Mammary epithelial cell (primary cell): ENCODE measurements at regions of chr13 and their contacts with region 1.

Region 1: GRCh38 chr13:27953676-27954405 is 15.3 kb downstream of the CDX2 start:
- DNase-seq: peak; percentile 69
- H3K4me3 ChIP-seq: peak overlapping the region; percentile 51 to 61 (median 56)
- H3K27ac ChIP-seq: no peak overlapping the region
- H3K4me1 ChIP-seq: peaks cover 12% of the 10 kb centered on the region
- H3K27me3 ChIP-seq: peaks cover 7% of the 10 kb centered on the region
- CTCF ChIP-seq: peak; percentile 64 to 82

Region 2: GRCh38 chr13:27868641-27869435 is 85.0 kb before region 1 on chr13:
- CTCF ChIA-PET with region 1: interaction called, 5 read pairs
- dilution Hi-C with region 1: no loop called
- in situ Hi-C with region 1: no loop called
- intact Hi-C with region 1: loop called (anchors 1 kb)
- DNase-seq: no peak
- H3K4me3 ChIP-seq: no peak overlapping the region
- H3K27ac ChIP-seq: no peak overlapping the region
- H3K4me1 ChIP-seq: no peaks in the 10 kb centered on the region
- H3K27me3 ChIP-seq: peaks cover 5% of the 10 kb centered on the region
- CTCF ChIP-seq: peak; percentile 44 to 54

Region 3: DNA sequence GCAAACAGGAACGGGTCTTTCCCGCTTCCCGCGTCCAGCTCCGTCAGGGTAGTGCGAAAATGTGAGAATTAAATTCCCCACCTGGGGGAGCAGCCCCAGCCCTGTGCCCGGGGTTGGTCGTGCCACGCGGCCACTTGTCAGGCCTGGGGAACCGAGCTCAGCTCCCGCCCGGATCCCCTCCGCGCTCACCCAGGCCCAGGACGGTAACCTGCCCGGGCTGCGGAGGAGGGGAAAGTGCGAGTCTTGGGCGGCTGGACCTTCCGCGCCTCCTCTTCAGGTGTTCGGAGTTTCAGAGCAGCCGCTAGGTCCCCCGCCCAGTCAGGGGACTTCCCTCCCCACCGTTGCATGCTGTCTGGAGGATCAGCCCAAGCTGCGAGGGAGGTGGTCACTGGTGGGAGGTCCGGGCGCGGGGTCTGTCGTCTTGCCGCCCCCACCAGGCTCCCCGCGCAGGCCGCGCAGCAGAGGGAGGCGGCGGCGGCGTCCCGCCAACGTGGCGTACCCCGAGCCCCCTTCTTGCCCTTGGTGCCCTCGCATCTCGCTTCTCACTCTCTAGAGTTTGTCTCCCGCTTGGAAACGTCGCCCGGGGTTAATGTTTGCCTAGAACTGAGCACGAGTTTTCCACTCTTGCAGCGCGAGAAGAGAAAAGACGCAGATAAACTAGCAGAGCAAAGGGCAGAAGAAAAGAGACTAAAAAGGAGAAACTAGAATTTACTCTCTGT is 26.6 kb after region 1 on chr13:
- CTCF ChIA-PET with region 1: no interaction called
- dilution Hi-C with region 1: no loop called
- in situ Hi-C with region 1: no loop called
- intact Hi-C with region 1: loop called (anchors 1 kb)
- DNase-seq: no peak
- H3K4me3 ChIP-seq: no peak overlapping the region
- H3K27ac ChIP-seq: no peak overlapping the region
- H3K4me1 ChIP-seq: no peaks in the 10 kb centered on the region
- H3K27me3 ChIP-seq: peaks cover 62% of the 10 kb centered on the region
- CTCF ChIP-seq: no peak

Region 4: DNA sequence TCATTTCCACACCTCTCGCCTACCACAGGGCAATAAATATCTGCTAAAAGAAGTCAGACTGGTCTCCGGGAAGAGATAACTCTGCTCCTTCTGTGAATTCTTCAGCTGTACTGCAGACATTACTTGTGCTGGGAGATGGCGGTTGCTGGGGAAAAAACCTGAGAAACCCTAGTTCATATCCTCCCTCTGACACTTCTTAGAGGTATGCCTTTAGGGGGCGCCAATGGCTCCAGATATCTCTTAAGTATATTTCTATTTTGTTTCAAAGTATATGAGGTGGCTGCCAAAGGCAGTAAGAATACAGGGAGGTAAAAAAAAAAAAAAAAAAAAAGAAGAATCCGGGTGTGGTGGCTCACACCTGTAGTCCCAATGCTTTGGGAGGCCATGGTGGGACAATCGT is 359.7 kb after region 1 on chr13:
- CTCF ChIA-PET with region 1: no interaction called
- dilution Hi-C with region 1: no loop called
- in situ Hi-C with region 1: no loop called
- intact Hi-C with region 1: no loop called
- DNase-seq: no peak
- H3K4me3 ChIP-seq: no peak overlapping the region
- H3K27ac ChIP-seq: no peak overlapping the region
- H3K4me1 ChIP-seq: peaks cover 5% of the 10 kb centered on the region
- H3K27me3 ChIP-seq: no peaks in the 10 kb centered on the region
- CTCF ChIP-seq: no peak